PC-9 (cell line): ENCODE measurements at regions of chr14 and their contacts with region 1.

Region 1: GRCh38 chr14:68911594-68912227 is 67.4 kb downstream of the ACTN1 start:
- DNase-seq: peak; percentile 69 to 73
- H3K4me3 ChIP-seq: no peak overlapping the region
- H3K27ac ChIP-seq: no peak overlapping the region
- H3K4me1 ChIP-seq: no peaks in the 10 kb centered on the region
- H3K27me3 ChIP-seq: no peaks in the 10 kb centered on the region
- CTCF ChIP-seq: peak; percentile 98

Region 2: GRCh38 chr14:68896132-68896531 is 15.6 kb before region 1 on chr14:
- CTCF ChIA-PET with region 1: no interaction called
- POLR2A ChIA-PET with region 1: no interaction called
- intact Hi-C with region 1: no loop called
- DNase-seq: no peak
- H3K4me3 ChIP-seq: no peak overlapping the region
- H3K27ac ChIP-seq: no peak overlapping the region
- H3K4me1 ChIP-seq: no peaks in the 10 kb centered on the region
- H3K27me3 ChIP-seq: no peaks in the 10 kb centered on the region
- CTCF ChIP-seq: no peak; the same call in 1 of the 2 replicates

Region 3: GRCh38 chr14:68926236-68926635 is 14.5 kb after region 1 on chr14:
- CTCF ChIA-PET with region 1: interaction called, 13 read pairs
- POLR2A ChIA-PET with region 1: no interaction called
- intact Hi-C with region 1: no loop called
- DNase-seq: no peak
- H3K4me3 ChIP-seq: no peak overlapping the region
- H3K27ac ChIP-seq: peak overlapping the region; percentile 70
- H3K4me1 ChIP-seq: peaks cover 47% of the 10 kb centered on the region
- H3K27me3 ChIP-seq: no peaks in the 10 kb centered on the region
- CTCF ChIP-seq: peak; percentile 58

Region 4: DNA sequence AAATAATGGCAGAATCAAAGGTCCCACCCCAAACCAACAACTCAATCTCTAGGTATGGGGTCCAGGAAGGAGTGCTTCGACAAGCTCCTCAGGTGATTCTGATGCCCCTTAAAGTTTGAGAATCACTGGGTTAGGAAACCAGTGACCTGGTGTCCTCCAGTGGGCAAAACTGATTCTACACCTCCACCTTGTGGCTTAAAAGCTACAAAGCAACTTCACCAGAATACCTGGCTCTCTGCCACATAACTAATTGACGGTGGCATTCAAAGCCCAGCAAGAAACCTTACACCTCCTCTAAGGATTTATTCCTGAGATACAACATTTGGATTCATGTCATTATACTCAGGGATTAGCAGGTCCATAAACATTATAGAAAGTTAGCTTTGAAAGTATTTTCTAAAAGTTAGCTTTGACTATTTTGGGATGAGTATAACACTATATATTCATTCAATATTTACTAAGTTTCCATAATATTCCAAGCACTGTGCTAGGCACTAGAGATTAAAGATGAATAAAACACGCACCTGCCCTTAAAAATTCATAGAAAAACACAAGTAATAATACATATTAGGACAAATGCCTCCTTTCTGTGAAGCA is 195.8 kb after region 1 on chr14:
- CTCF ChIA-PET with region 1: interaction called, 4 read pairs
- POLR2A ChIA-PET with region 1: no interaction called
- intact Hi-C with region 1: loop called (anchors 1 kb)
- DNase-seq: peak; percentile 62 to 68
- H3K4me3 ChIP-seq: no peak overlapping the region
- H3K27ac ChIP-seq: no peak overlapping the region
- H3K4me1 ChIP-seq: no peaks in the 10 kb centered on the region
- H3K27me3 ChIP-seq: no peaks in the 10 kb centered on the region
- CTCF ChIP-seq: peak; percentile 90